Activated CD4-positive, alpha-beta memory T cell treated with anti-CD3 and anti-CD28 coated beads for 36 hours (primary cell): ENCODE measurements at regions of chr4 and their contacts with region 1.

Region 1: DNA sequence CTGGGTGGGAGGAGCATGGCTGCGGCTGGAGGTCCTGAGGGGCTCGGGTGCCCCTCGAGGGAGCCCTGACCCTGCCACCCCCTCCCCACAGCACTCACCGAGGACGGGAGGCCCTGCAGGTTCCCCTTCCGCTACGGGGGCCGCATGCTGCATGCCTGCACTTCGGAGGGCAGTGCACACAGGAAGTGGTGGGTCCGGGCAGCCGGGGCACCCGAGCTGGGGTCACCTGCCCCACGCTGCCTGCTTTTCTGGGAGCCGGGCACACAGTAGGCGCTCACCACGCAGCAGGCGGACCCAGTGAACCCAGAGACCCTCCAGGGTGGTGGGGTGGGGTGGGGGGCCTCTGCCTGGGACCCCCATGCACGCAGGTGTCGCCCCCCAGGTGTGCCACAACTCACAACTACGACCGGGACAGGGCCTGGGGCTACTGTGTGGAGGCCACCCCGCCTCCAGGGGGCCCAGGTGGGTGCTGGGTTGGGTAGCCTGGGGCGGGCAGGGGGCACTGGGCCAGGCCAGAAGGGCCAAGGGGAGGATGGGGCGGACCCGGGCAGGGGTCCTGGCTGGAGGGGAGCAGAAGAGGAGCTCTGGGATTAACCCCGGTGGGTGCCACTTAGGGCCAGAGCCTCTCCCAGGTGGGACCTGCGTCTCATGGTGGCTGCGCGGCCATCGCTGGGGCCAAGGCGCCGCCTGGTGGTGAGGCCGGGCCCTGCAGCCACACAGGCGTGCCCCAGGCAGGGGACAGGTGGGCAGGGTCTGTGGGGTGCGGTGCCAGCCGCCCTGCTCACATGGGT is 1.4 kb downstream of the HGFAC start:
- DNase-seq: peak; percentile 75
- H3K4me3 Mint-ChIP-seq: no peak overlapping the region
- H3K27ac Mint-ChIP-seq: no peak overlapping the region
- H3K4me1 Mint-ChIP-seq: no peaks in the 10 kb centered on the region
- H3K27me3 Mint-ChIP-seq: no peaks in the 10 kb centered on the region

Region 2: DNA sequence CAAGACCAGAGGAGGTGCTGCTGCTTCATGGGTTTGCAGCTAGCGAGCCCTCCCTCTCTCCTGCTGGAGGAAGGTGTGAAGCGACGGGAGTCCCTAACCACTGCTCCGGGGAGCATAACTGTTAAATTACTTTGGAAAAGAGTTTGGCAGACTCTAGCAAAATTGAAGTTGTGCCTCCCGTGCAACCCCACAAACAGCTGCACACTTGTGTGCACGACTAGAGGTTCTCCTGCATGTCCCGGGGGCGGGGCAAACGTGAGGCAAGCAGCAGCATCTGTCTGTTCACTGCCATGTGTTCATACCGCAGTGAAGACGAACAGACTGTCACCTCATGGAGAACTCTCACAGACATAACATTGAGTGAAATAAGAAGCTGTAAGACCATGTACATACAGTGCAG is 721.6 kb before region 1 on chr4:
- CTCF ChIA-PET with region 1: no interaction called
- POLR2A ChIA-PET with region 1: no interaction called
- intact Hi-C with region 1: no loop called
- DNase-seq: no peak
- H3K4me3 Mint-ChIP-seq: no peak overlapping the region
- H3K27ac Mint-ChIP-seq: no peak overlapping the region
- H3K4me1 Mint-ChIP-seq: peaks cover 13% of the 10 kb centered on the region
- H3K27me3 Mint-ChIP-seq: no peaks in the 10 kb centered on the region

Region 3: DNA sequence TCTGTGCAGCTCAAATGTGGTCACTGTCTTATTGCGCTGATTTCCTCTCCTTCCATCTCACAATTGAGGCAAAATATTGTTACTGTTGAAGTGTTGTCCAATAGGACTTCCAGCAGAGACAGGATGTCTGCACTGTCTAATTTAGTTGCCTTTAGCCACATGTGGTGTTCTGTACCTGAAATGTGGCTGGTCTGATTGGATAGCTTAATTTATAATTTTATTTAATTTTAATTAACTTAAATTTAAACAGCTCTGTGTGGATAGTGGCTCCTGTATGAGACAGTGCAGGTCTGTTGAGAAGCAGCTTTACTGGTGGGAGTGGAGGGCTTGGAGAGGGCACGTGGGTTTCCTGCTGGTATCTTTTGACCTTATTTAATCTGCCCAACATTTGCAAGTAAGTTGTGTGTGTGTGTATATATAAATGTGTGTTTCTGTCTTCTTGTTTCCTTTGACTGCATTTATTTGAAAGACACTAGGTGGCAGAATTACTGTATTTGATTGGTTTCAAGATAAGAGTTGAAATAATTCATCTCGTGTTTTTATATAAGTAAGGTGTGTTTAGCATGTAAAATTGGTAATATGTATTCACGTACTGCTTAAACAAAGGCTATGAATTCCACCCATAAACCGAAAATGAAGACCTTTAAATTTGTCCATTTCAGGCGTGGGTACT is 249.5 kb before region 1 on chr4:
- CTCF ChIA-PET with region 1: no interaction called
- POLR2A ChIA-PET with region 1: no interaction called
- intact Hi-C with region 1: loop called (anchors 5 kb)
- DNase-seq: no peak
- H3K4me3 Mint-ChIP-seq: no peak overlapping the region
- H3K27ac Mint-ChIP-seq: no peak overlapping the region
- H3K4me1 Mint-ChIP-seq: peaks cover 51% of the 10 kb centered on the region
- H3K27me3 Mint-ChIP-seq: no peaks in the 10 kb centered on the region

Region 4: GRCh38 chr4:3346146-3346545 is 97.0 kb before region 1 on chr4:
- CTCF ChIA-PET with region 1: interaction called, 23 read pairs
- POLR2A ChIA-PET with region 1: no interaction called
- intact Hi-C with region 1: loop called (anchors 1 kb)
- DNase-seq: peak; percentile 28
- H3K4me3 Mint-ChIP-seq: no peak overlapping the region
- H3K27ac Mint-ChIP-seq: no peak overlapping the region
- H3K4me1 Mint-ChIP-seq: peaks cover 18% of the 10 kb centered on the region
- H3K27me3 Mint-ChIP-seq: no peaks in the 10 kb centered on the region

Region 5: DNA sequence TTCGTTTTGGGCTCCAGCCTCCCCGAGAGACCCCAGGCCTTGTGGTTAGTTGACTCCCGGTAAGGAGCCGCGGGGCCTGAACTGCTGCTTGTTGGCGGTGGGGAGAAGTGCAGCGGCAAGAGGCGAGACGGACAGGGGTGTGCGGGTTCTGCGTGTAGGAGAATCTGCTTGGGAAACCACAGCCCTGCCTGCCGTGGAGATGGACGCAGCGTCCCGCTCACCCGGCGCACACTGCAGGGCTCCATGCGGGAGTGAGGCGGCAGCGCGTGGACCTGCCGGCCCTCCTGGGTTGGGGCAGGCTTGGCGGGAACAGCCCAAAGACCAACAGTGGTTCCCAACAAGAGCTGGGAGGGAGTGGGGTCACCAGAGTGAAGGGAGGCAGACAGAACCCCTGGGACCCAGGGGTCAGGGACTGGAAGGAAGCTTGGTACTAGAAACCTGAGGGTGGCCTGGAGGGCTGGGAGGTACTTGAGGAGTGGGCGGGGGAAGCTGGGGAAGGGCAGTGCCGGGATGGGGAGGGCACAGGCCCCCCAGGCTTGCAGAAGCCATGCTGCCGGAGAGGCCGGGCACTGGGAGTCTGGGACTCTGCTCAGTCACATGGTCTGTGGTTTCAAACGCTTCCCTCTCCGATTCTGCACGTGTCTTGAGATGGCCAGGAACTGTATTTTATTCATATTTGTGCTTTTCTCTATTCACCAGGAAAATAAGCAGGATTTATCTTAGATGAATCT is 79.6 kb before region 1 on chr4:
- CTCF ChIA-PET with region 1: no interaction called
- POLR2A ChIA-PET with region 1: no interaction called
- intact Hi-C with region 1: no loop called
- DNase-seq: no peak
- H3K4me3 Mint-ChIP-seq: no peak overlapping the region
- H3K27ac Mint-ChIP-seq: no peak overlapping the region
- H3K4me1 Mint-ChIP-seq: peaks cover 19% of the 10 kb centered on the region
- H3K27me3 Mint-ChIP-seq: no peaks in the 10 kb centered on the region